Heart left ventricle (tissue), 16 donors: ENCODE measurements at regions of chrX and their contacts with region 1.

Region 1: DNA sequence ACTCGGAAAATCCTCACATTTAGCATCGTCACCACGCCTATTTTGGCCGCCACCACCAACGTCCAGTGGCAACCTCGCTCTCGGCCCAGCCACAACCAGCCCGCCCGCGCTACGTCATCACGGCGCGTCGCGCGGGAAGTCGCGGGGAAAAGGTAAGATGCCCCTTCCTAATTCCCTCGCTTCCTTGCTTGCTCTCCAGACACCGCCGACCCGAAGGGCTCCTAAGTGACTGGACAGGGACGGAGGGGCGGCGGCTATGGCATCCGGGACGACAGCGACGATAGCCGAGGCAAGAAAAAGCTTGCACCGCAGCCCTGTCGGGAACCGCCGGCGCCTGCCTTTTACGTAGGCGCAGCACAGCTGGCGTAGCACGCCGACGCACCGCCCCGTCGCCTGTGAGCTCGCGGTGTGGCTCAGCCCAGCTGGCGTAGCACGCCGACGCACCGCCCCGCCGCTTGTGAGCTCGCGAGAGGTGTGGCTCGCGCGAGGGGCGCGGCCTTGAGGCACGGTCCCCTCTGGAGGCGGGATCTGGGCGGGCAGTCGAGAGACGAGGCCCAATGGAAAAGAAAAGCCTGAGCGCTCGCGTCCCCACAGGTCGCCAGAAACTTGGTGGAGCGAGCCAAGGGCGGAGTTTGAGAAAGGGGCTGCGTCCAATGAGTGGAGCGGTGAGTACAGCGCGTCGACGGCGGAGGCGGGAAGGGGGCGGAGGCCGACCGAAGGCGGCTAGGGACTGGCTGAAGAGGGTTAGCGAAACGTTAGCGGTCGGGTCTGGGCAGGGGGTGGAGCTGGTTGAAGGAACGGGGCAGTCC is at the start of gene HDAC6:
- DNase-seq: peak; percentile 96 to 98 (median 97)
- ATAC-seq: peak; percentile 94 to 96 (median 96)
- H3K4me3 ChIP-seq: peak within 1 kb of the TSS; percentile 43 to 96 (median 67)
- H3K27ac ChIP-seq: peak within 1 kb of the TSS; percentile 93 to 99 (median 96)
- H3K4me1 ChIP-seq: peaks cover 0 to 12% (median 3%) of the 10 kb centered on the region in 12 donors
- H3K27me3 ChIP-seq: no peaks in the 10 kb centered on the region
- CTCF ChIP-seq: no peak
- POLR2A ChIP-seq: peak in 1 of 2 donors; percentile 48
- total RNA-seq, gene HDAC6: 27.7 to 48.6 (median 36.9) TPM

Region 2: DNA sequence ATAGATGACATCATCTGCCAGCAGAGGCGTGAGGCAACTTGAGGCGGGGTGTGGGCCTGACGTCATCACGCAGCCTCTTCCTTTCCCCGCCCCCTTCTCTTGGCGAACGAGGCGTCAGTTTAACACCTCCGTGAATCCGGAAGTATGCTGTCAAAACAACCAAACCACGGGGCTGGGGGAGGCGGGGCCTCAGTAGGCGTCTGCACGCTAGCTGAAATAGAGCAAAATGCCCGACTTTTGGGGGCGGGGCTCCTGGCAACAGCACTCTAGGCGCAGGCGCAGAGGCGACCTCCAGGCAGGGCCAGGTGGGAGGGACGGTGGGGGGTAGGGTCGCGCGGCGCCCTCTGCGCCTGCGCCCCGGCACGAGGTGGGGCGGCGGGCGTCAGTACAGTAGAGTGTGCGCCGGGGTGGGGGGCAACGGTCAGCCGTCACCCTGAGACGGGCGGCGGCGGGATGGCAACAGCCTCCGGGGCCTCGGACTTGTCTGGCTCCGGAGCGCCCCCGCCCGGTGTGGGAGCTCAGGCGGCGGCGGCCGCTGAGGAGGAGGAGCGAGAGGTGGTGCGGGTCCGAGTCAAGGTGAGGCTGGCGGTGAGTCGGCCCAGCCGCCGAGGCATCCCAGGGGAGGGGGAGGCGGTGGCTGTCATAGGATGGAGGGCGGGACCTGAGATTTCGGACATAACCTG is 262.0 kb before region 1 on chrX and contains the start of gene TBC1D25:
- intact Hi-C with region 1: loop called in 1 of 10 experiments (anchors 5 kb)
- DNase-seq: peak; percentile 95 to 97 (median 96)
- ATAC-seq: peak; percentile 88 to 96 (median 92)
- H3K4me3 ChIP-seq: peak within 1 kb of the TSS; percentile 53 to 91 (median 74)
- H3K27ac ChIP-seq: peak within 1 kb of the TSS; percentile 73 to 95 (median 90)
- H3K4me1 ChIP-seq: peaks cover 0 to 16% (median 3%) of the 10 kb centered on the region in 12 donors
- H3K27me3 ChIP-seq: peaks cover 0 to 6% (median 0%) of the 10 kb centered on the region in 9 donors
- CTCF ChIP-seq: peak in 11 of 12 donors; percentile 6 to 66 (median 45)
- POLR2A ChIP-seq: peak in 1 of 2 donors; percentile 45
- total RNA-seq, gene TBC1D25: 13.4 to 21.6 (median 16.8) TPM

Region 3: DNA sequence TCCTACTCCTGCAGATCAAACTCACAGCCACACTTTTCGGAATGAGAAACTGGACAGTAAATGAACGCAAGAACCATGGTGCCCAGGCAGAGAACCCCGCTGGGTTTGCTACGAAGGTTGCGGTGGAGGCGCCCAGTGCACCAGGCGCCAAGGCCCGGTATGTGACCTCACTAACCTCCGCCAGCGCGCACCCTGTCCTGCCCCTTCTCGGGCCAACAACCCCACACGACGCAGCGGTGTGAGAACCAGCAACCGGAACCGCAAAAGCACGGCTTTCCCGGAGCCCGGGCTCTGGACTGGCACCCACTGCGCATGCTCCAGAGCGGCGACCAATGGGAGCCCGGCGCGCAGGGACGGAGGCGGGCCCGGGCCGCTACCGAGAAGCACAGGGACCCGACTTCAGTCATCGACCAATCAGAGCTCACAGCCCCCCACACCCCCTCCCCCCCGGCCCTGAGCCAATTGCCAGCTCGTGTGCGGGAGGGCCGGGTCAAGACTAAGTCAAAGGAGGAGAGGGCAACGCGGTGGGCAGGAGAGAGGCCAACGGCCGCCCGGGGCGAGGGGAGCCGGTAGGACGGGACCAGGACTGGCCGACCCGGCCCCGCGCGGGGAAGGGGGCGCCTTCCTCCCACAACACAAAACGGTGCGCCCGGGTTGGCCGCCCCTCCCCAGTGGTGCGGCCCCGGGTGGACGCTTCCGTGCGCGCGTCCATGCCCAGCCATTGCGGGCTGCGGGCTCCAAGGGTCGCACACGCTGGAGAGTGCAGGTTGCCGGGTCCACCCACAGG is 125.2 kb before region 1 on chrX:
- intact Hi-C with region 1: loop called in 2 of 10 experiments (anchors 1 to 5 kb)
- DNase-seq: peak; percentile 89 to 95 (median 92)
- ATAC-seq: peak; percentile 99 to 100 (median 100)
- H3K4me3 ChIP-seq: peak overlapping the region; percentile 41 to 95 (median 76)
- H3K27ac ChIP-seq: peak overlapping the region; percentile 47 to 93 (median 87)
- H3K4me1 ChIP-seq: peaks cover 0 to 9% (median 0%) of the 10 kb centered on the region in 12 donors
- H3K27me3 ChIP-seq: no peaks in the 10 kb centered on the region
- CTCF ChIP-seq: peak in 1 of 12 donors; percentile 9
- POLR2A ChIP-seq: peak in 1 of 2 donors; percentile 72

Region 4: DNA sequence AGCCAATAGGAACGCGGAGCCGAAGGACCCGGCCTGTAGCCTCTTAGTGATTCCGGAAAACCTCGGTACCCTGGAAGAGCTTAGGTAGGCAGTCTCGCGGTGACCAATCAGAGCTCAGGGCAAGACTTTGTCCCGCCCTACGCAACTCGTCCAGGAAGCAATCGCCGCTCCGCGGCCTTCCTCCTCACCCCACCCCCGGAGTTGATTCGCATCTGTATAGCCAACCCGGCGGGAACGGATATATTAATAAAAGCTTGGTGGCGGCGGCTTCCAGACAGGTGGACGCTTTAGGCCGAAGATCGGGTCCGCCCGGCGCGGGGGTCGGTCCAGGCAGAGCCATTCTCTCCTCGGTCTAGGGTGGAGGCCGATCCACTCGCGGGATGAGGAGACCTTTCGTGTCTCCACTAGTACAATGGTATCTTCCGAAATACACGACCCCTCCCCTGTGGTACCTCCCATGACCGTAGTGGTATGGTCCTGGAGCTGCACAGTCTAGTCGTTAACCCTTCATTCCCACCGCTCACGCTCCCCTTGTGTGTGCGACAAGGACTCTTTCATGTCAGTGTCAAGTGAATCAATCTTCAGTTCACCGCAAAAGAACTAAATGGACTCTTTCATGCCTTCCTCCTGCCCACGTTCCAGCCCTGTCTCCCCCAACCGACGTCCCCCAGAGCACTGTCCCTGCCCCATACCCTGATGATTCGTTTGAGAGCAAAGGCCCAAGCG is 64.1 kb before region 1 on chrX:
- intact Hi-C with region 1: loop called in 7 of 10 experiments (anchors 1 to 10 kb)
- DNase-seq: peak; percentile 91 to 95 (median 92)
- ATAC-seq: peak; percentile 99 to 100 (median 99)
- H3K4me3 ChIP-seq: peak overlapping the region; percentile 19 to 89 (median 68)
- H3K27ac ChIP-seq: peak overlapping the region; percentile 76 to 94 (median 88)
- H3K4me1 ChIP-seq: peaks cover 0 to 9% (median 2%) of the 10 kb centered on the region in 12 donors
- H3K27me3 ChIP-seq: no peaks in the 10 kb centered on the region
- CTCF ChIP-seq: no peak
- POLR2A ChIP-seq: peak in 1 of 2 donors; percentile 58

Region 5: DNA sequence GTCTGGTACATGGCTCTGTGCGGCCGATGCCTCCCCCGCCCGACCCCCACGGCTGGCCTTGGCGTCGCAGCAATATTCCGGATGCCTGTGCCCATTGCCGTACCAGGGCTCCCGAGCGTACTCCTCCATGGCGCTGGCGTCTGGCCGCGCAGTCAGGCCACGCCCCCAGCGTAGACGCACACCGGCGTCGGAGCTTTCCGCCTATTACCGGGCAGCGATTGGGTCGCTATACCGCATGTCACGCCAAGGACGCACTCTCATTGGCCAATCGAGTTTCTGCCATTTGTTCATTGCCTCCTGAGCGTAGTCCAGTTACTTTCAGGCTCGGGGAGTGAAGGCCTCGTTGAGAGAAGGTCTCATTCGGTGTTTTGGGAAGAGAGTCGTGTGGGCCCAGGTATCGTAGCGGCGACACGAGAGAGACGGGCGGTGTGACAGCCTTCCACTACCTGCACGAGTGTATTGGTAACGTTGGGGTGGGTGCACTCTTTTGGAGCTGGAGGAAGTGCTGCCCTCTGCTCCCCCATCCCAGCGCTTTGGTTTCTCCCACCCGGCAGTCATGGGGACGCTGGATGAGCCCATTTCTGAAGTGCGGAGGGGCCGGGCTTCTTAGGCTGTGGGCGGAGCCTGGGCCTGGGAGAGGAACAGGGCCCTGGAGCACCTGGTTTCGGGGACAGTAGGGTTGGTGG is 96.3 kb after region 1 on chrX and contains the starts of genes PQBP1 and TIMM17B:
- intact Hi-C with region 1: loop called in 5 of 10 experiments (anchors 5 to 10 kb)
- DNase-seq: peak; percentile 90 to 94 (median 92)
- ATAC-seq: peak; percentile 95 to 98 (median 96)
- H3K4me3 ChIP-seq: peak within 1 kb of the TSS; percentile 33 to 88 (median 77)
- H3K27ac ChIP-seq: peak within 1 kb of the TSS; percentile 89 to 97 (median 94)
- H3K4me1 ChIP-seq: peaks cover 0 to 20% (median 10%) of the 10 kb centered on the region in 12 donors
- H3K27me3 ChIP-seq: peaks cover 0 to 3% (median 0%) of the 10 kb centered on the region in 9 donors
- CTCF ChIP-seq: no peak
- POLR2A ChIP-seq: peak in 1 of 2 donors; percentile 86
- total RNA-seq, gene PQBP1: 45.3 to 67.0 (median 52.9) TPM
- total RNA-seq, gene TIMM17B: 57.1 to 86.9 (median 71.0) TPM

Region 6: GRCh38 chrX:49053223-49054072 is 252.0 kb after region 1 on chrX:
- intact Hi-C with region 1: no loop called
- DNase-seq: peak; percentile 35 to 74 (median 63)
- ATAC-seq: peak in 3 of 4 donors; percentile 82 to 86 (median 83)
- H3K4me3 ChIP-seq: peak overlapping the region; percentile 35 to 78 (median 62)
- H3K27ac ChIP-seq: peak overlapping the region; percentile 31 to 88 (median 73)
- H3K4me1 ChIP-seq: peaks cover 0 to 3% (median 0%) of the 10 kb centered on the region in 12 donors
- H3K27me3 ChIP-seq: no peaks in the 10 kb centered on the region
- CTCF ChIP-seq: no peak
- POLR2A ChIP-seq: no peak